CD8-positive, alpha-beta T cell (primary cell): ENCODE measurements at regions of chr9 and their contacts with region 1.

Region 1: GRCh38 chr9:108125625-108126024 is 636.1 kb upstream of the KLF4 start:
- DNase-seq: no peak
- ATAC-seq: no peak
- H3K4me3 ChIP-seq: no peak overlapping the region
- H3K4me3 Mint-ChIP-seq: no peak overlapping the region
- H3K27ac ChIP-seq: no peak overlapping the region
- H3K27ac Mint-ChIP-seq: no peak overlapping the region
- H3K4me1 ChIP-seq: no peaks in the 10 kb centered on the region
- H3K4me1 Mint-ChIP-seq: no peaks in the 10 kb centered on the region
- H3K27me3 ChIP-seq: no peaks in the 10 kb centered on the region
- H3K27me3 Mint-ChIP-seq: no peaks in the 10 kb centered on the region
- CTCF ChIP-seq: no peak

Region 2: GRCh38 chr9:108193026-108193710 is 67.5 kb after region 1 on chr9:
- CTCF ChIA-PET with region 1: no interaction called
- POLR2A ChIA-PET with region 1: no interaction called
- intact Hi-C with region 1: loop called in 1 of 2 experiments (anchors 2 kb)
- DNase-seq: no peak
- ATAC-seq: no peak
- H3K4me3 ChIP-seq: no peak overlapping the region
- H3K4me3 Mint-ChIP-seq: no peak overlapping the region
- H3K27ac ChIP-seq: no peak overlapping the region
- H3K27ac Mint-ChIP-seq: no peak overlapping the region
- H3K4me1 ChIP-seq: no peaks in the 10 kb centered on the region
- H3K4me1 Mint-ChIP-seq: no peaks in the 10 kb centered on the region
- H3K27me3 ChIP-seq: no peaks in the 10 kb centered on the region
- H3K27me3 Mint-ChIP-seq: peaks cover 2% of the 10 kb centered on the region
- CTCF ChIP-seq: no peak